Transverse colon (tissue), 4 donors: ENCODE measurements at regions of chr22 and their contacts with region 1.

Region 1: DNA sequence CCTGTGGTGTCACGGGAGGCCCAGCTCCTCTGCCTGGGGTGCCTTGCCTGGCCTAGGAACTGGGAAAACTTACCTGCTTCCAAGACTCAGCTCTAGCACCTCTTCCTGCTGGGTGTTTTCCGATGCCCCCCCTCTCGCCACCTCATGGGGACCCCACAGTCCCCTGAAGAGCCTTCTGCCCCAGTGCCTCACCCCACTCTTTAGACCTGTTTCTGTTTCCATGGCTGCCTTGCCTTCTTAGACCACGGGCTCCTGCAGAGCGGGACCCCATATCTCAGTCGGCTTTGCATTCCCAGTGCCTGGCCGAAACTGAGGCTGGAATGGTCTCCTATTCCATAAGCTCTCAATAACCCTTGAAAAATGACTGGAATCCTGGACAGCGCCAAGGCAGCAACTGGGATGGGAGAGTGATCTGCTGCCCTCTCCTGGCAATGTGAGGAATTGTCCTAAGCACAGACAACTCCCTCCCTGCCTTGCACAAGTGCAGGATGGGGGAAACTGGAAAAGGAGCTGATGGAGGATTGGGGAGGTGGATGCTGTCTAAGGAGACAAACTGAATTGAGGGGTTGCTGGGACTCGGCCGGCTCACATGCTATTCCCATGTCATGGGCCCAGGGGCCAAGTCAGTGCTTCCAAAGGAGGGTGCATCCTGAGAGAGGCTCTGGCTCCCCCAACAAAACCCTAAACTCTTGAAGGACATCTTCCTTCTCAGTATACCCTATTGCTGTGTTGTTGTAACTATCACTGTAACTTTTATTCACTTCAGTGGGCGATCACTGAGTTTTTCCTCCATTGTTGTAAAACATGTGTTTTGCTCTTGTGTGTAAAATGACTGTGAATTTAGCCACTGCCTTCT is 26.6 kb upstream of the IL17RA start:
- DNase-seq: peak; percentile 60
- H3K4me3 ChIP-seq: no peak overlapping the region
- H3K27ac ChIP-seq: no peak overlapping the region
- H3K4me1 ChIP-seq: no peaks in the 10 kb centered on the region
- H3K27me3 ChIP-seq: peaks cover 10% of the 10 kb centered on the region
- CTCF ChIP-seq: peak; percentile 73 to 88 (median 86)
- EP300 ChIP-seq: no peak
- POLR2A ChIP-seq: no peak

Region 2: DNA sequence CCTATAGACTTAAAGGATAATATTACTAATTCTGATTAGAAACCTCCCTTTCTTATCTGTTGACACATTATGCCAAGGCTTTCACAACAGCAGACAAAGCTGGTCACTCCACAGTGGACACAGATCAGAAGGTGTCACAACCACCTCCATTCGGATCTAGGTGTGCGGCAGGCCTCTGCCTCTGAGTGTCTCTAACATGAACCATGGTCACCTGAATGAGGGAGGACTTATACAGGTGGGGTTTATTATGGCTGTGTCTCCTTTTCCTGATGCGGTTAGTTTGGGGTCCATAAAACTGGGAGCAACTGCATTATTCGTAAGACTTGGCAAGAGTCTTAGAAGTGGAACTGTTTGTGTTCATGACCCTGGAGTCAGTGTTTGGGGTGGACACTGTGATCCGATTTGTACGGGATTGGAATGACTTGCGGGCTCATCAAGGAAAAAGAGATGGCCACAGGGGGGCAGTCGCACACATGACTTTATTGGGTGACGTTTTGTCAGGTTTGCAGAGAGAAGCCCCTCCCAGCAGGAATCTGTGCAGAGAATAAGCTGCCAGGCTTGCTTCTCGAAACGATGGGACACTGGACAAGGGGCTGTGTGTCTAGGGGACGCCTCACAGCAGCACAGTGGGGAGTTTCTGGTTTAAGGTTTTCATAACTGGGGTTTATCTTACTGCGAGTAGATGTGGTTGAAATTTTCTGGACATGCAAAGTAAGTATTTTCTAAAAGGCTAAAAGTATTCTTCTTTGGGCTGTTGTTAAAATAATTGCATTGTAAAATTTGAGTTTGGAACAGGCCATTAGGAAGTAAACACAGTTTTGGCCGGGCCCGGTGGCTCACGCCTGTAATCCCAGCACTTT is 140.8 kb before region 1 on chr22:
- in situ Hi-C with region 1: loop called in 2 of 4 experiments (anchors 5 kb)
- intact Hi-C with region 1: no loop called
- DNase-seq: peak; percentile 47
- H3K4me3 ChIP-seq: no peak overlapping the region
- H3K27ac ChIP-seq: no peak overlapping the region
- H3K4me1 ChIP-seq: no peaks in the 10 kb centered on the region
- H3K27me3 ChIP-seq: peaks cover 24% of the 10 kb centered on the region
- CTCF ChIP-seq: peak; percentile 29 to 53 (median 39)
- EP300 ChIP-seq: no peak
- POLR2A ChIP-seq: no peak

Region 3: GRCh38 chr22:17201285-17201945 is 143.2 kb after region 1 on chr22:
- in situ Hi-C with region 1: no loop called
- intact Hi-C with region 1: no loop called
- DNase-seq: no peak
- H3K4me3 ChIP-seq: no peak overlapping the region
- H3K27ac ChIP-seq: no peak overlapping the region
- H3K4me1 ChIP-seq: no peaks in the 10 kb centered on the region
- H3K27me3 ChIP-seq: no peaks in the 10 kb centered on the region
- CTCF ChIP-seq: peak in 1 of 5 experiments; percentile 8
- EP300 ChIP-seq: no peak
- POLR2A ChIP-seq: no peak

Region 4: GRCh38 chr22:17368554-17369438 is 310.6 kb after region 1 on chr22:
- in situ Hi-C with region 1: loop called in 1 of 4 experiments (anchors 25 kb)
- intact Hi-C with region 1: no loop called
- DNase-seq: peak; percentile 21
- H3K4me3 ChIP-seq: peak overlapping the region in 3 of 4 donors; percentile 25 to 47 (median 45)
- H3K27ac ChIP-seq: peak overlapping the region; percentile 31 to 46 (median 35)
- H3K4me1 ChIP-seq: peaks cover 4 to 25% (median 19%) of the 10 kb centered on the region in 4 donors
- H3K27me3 ChIP-seq: peaks cover 90% of the 10 kb centered on the region
- CTCF ChIP-seq: no peak
- EP300 ChIP-seq: no peak
- POLR2A ChIP-seq: no peak